Posterior cingulate gyrus (tissue), 11 donors: ENCODE measurements at regions of chr12 and their contacts with region 1.

Region 1: DNA sequence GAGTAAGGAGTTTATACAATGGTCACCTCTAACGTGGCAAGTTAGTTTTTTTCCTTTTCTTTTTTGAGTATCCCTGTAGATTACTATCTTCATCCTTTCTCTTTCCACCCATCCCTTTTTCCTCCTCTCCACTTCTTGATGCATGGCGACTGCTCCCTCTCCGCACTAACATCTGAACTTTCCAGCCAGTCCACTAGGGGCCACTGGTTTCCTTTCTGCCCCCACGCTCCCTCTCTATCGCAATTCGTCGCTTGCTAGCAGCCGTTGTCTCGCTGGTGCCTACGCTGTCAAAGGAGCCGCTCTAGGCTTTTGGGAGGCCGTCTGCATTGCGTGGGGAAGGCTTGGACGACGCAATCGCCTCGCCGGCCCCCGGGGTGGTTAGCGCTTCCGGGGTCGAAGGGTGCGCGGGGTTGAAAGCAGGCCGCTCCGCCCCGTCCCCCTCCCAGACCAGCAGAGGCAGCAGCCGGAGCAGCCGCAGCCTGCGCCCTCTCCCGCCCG is at the start of gene PCBP2:
- DNase-seq: peak; percentile 97 to 100 (median 99)

Region 2: DNA sequence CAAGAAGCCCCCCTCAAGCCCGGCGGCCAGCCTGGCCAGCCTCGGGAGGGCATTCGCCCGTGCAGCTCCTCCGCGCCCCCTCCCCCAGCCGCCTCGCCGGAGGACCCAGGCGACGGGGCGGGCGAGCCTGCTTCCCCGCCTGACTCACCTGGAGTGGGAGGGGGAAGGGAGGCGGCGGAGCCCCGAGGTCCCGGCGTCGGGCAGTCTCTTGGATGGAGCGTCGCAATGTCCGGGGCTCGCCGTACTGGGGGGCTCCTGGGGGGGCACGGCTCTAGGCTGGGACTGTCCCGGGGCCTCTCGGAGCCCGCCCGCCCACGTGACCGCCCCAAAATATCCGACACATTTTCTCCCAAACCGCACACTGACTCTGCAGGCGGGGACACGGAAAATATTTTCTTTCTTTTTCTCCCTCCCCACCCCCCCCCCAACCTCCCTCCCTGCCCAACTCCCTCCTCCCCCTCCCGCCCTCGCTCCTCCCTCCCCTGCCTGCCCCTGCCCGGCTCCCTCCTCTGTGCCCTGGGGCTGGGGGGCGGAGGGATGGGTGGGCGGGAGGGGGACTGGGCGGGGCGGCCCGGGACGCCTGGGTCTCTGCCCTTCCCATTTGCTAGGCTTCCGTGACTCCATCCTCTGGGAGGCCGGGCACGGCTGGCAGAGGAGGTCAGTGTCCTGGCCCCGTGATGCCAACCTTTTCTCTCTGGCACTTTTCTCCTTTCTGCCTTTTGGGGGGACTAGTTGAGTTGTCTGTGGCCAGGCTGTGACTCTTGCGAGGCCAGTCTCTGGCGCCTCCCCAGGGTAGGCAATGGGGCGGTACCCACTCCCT is 219.7 kb before region 1 on chr12 and contains the start of gene RARG:
- intact Hi-C with region 1: no loop called
- DNase-seq: peak in 3 of 10 donors; percentile 75 to 87 (median 86)

Region 3: GRCh38 chr12:53500776-53501614 is 49.3 kb after region 1 on chr12 and contains the start of gene TARBP2:
- intact Hi-C with region 1: loop called (anchors 2 kb)
- DNase-seq: peak; percentile 96 to 100 (median 98)

Region 4: DNA sequence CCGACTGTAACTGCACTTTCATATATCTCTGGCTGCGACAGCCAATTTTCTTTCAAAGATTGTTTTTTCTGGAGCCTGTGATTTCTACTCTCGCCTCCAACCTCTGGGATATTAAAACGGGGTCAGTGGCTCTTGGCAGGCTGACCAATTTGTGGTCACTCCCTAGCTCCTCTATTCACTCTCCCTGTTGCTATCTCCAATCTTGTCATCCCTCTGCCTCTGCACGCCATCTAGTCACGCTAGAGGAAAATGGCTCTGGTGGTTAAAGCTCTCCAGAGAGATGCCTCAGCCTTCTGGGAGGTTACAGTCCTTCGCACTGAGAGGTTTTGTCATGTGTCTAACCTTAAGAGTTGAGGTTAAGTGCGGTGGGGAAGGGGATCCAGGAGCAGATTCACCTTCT is 359.9 kb after region 1 on chr12:
- intact Hi-C with region 1: no loop called
- DNase-seq: no peak